Posterior vena cava (tissue), 2 donors: ENCODE measurements at regions of chr1 and their contacts with region 1.

Region 1: GRCh38 chr1:8314346-8315280 is 3.3 kb upstream of the SLC45A1 start:
- DNase-seq: peak; percentile 88

Region 2: DNA sequence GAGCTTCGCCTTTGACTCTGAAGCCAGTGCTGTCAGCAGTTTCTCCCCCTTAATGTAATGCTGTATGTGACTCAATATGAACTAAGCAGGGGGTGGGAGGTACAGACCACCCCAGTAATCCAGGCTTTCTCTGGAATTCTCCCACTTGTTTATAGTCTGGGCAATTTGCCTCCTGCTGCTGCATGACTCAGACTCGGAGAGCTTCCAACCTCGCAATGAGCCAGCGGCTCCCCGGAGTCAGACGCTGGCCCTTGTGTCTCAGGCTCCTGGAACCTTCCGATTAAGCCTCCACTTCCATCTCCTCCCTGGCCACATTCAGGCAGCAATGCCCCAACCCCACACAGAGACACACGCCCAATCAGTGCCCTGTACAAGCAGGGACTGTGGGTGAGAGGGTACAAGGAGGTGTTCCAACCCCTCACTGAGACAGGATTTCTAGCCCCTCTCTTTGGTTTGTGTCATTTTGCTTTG is 1015.2 kb before region 1 on chr1:
- intact Hi-C with region 1: no loop called
- DNase-seq: peak; percentile 87

Region 3: DNA sequence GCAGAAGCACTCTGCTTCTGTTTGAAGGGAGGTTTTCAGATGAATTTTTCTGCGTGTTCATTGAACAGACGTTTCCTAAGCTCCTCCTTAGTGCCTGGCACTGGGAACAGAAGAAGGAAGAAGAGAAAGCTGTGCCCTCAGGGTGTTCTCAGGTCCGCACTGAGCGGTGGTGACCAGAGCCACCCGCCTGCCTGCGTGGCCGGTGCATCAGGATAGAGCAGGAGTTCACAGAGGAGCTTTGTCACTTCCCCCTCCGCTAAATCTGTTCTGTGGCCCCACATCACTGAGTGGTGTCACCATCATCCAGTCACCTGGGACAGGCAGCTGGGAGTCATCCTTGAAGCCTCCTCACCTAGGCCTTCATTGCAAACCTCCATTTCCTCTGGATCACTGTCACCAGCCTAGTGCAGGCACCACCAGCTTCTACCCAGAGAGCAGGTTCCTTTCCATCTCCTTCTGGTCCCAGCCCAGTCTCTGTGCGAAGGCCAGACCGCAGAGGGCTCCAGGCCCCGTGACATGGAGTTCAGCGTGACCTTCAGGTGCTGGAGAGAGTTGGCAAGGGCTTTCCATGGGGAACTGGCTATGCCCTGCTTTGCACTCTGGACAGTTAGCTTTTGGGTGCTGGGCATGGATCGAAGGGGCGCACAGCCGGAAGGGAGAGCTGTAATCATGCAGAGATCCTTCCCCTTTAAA is 331.4 kb before region 1 on chr1:
- intact Hi-C with region 1: loop called (anchors 5 to 10 kb)
- DNase-seq: peak; percentile 46

Region 4: GRCh38 chr1:7989762-7990428 is 324.7 kb before region 1 on chr1:
- intact Hi-C with region 1: loop called in 1 of 2 experiments (anchors 10 kb)
- DNase-seq: no peak

Region 5: DNA sequence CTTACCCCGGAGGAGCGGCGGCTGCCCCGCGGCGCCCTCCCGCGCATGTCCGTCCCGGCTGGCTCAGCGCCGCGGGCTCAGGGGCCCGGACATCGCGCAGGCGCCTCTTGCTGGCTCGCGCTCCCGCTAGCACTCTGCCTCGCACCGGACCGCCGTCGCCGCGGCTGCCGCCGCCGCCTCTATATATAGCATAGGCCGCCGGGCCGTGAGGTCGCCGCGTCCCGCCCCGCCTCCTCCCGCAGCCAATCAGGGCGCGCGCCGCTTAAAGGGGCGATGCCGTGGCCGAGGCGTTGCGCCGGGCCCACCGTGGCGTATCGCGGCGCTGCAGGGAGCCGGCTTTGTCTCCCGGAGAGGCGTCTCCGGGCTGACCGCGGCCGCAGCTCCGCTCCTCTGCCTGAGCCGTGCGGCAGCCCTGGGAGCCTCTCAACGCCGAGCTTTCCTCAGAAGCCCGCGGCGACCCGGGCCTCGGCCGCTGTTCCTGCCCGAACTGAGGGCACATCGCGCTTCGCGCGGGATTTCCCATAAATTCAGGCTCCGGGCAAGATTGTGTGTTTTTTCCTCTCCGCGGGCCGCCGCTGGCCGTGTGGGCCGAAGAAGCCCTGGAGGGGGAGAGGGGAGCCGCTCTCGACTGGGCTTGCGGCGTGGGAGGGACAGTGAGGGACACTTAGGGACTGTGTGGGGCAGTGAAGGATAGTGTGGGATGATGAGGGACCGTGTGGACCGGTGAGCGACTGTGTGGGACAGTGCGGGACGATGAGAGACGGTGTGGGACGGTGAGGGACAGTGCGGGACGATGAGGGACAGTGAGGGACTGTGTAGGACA is 288.2 kb before region 1 on chr1 and contains the start of gene ERRFI1:
- intact Hi-C with region 1: loop called in 1 of 2 experiments (anchors 5 kb)
- DNase-seq: peak; percentile 98
- total RNA-seq, gene ERRFI1: 84.4 to 151 TPM

Region 6: DNA sequence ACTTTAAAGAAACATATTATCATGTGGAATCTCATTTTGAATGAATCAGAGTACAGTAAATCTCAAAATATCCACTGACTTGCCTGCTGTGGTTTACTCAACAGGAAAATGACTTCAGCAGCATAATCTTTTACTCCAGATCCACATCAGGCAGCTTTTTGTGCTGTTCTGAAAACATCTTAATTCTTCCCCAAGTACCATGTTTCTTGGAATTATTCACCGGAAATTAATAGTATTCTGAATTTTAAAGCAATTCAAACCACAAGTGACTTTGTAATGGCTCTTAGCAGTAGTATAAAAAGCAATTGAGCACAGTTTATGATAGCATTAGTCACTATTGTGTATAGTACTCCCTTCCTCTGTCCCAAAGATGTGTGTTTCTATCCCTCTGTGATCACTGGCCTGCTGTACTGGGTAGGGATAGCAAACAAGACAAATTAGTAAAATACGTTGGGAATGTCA is 224.3 kb before region 1 on chr1:
- intact Hi-C with region 1: no loop called
- DNase-seq: no peak

Region 7: DNA sequence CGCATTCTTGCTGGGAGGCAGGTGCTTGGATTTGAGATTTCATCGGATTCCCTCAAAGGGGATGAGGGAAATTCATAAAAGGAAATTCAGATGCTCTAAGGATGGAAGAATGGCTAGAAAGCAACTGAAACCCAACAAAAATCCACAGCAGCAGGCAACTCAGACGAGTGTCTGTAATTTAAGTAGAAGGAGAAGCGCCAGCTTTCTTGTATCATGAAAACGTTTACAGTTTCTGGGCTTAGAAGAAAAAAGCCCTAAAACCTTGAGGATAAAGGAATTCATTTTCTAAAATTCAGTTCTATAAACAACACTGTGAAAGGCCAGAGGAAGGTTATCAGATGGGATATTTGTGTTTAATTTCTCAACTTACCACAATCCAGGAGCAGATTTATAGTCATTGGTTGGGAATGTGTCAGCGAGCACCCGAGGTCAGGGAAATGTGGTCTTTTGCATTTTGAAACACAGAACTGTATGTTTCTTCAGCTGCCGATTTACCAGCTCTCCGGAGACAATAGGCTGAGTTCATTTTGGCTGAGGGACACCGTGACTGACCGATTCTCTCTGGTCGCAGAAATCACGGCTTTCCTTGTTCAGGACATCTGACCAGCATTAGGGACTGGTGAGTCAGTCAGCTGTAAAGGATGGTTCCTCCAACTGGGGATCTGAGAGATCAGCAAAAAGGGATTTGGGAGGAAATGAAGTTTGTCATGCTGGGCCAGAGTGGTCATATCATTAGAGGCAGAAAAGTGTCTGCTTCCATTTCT is 176.9 kb before region 1 on chr1:
- intact Hi-C with region 1: loop called in 1 of 2 experiments (anchors 10 kb)
- DNase-seq: no peak